ENCODE measurements at regions of chr15 and their contacts with region 1.

Region 1: DNA sequence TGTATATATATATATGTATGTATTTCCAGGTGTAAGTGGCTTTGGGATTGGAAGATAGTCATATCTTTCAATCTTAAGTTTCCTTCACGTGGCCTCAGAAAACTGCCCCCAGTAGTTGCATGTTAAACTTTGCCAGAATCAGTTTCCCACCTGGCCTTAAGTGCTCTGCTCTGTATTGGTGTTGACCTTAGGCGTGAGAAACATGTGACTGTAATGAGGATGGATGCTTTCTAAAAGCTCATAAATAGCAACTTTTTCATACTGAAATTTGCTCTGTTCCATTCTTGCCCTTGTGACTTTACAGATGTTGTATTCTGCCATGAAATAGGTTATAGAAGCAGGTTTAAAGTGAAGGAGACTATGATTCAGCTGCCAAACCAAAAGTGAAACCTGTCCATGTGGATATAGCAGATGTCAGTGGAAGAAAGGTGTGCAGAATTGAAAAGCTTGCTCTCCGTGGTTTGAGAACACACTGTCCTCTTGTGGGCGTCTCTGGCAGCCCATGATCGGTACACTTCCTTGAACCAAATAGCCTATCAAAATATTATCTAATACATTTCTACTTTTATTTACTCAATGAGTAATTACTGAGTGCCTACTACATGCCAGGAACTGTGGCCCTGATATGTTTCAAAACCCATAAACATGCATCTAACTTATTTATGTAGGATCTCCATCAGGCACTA is 15.8 kb downstream of the SCG5 start:
- DNase-seq: no peak
- ATAC-seq: no peak
- H3K4me3 ChIP-seq: no peak overlapping the region
- H3K27ac ChIP-seq: no peak overlapping the region
- H3K4me1 ChIP-seq: peaks cover 10% of the 10 kb centered on the region
- H3K27me3 ChIP-seq: no peaks in the 10 kb centered on the region
- CTCF ChIP-seq: no peak

Region 2: GRCh38 chr15:32844118-32844711 is 186.9 kb after region 1 on chr15:
- intact Hi-C with region 1: loop called in 1 of 2 experiments (anchors 10 kb)
- DNase-seq: no peak
- ATAC-seq: no peak
- H3K4me3 ChIP-seq: no peak overlapping the region
- H3K27ac ChIP-seq: no peak overlapping the region
- H3K4me1 ChIP-seq: no peaks in the 10 kb centered on the region
- H3K27me3 ChIP-seq: peaks cover 0 to 2% (median 0%) of the 10 kb centered on the region in 3 donors
- CTCF ChIP-seq: peak; percentile 46

Region 3: GRCh38 chr15:32952901-32953532 is 295.7 kb after region 1 on chr15:
- intact Hi-C with region 1: loop called in 1 of 2 experiments (anchors 5 kb)
- DNase-seq: peak in 1 of 2 donors; percentile 26
- ATAC-seq: no peak
- H3K4me3 ChIP-seq: no peak overlapping the region
- H3K27ac ChIP-seq: no peak overlapping the region
- H3K4me1 ChIP-seq: no peaks in the 10 kb centered on the region
- H3K27me3 ChIP-seq: no peaks in the 10 kb centered on the region
- CTCF ChIP-seq: no peak

Region 4: GRCh38 chr15:32994810-32995424 is 337.6 kb after region 1 on chr15:
- intact Hi-C with region 1: loop called (anchors 1 to 10 kb)
- DNase-seq: no peak
- ATAC-seq: no peak
- H3K4me3 ChIP-seq: no peak overlapping the region
- H3K27ac ChIP-seq: no peak overlapping the region
- H3K4me1 ChIP-seq: no peaks in the 10 kb centered on the region
- H3K27me3 ChIP-seq: no peaks in the 10 kb centered on the region
- CTCF ChIP-seq: peak; percentile 45

Region 5: DNA sequence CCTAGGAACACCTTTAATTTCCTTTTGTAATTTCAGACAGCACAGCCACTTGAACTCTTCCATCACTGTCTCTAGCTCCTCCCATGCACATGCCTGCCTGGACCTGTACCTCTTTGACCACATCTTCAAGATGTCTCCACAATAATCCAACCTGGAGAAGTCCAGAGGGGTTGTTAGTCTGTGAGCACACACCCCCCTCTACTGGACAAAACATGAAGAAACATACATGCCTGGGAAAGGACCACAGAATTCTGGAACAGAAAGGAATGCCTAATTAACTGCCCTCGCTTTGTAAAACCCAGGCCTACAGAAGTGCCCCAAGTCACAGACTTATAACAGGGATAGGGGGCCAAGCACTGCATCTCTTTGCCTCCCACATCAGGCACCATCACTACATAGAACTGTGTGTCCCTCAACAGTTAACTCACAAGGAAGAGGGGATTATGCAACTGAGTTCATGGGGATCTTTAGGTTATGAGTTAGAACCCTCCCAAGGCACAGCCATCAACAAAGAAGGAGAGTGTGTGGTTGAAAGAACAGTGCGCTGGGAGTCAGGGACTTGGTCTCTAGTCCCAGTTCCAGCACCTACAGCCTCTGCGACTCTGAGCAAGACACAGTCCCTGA is 475.5 kb after region 1 on chr15:
- intact Hi-C with region 1: loop called (anchors 10 kb)
- DNase-seq: no peak
- ATAC-seq: peak; percentile 62 to 78 (median 66)
- H3K4me3 ChIP-seq: no peak overlapping the region
- H3K27ac ChIP-seq: no peak overlapping the region
- H3K4me1 ChIP-seq: peaks cover 38% of the 10 kb centered on the region
- H3K27me3 ChIP-seq: no peaks in the 10 kb centered on the region
- CTCF ChIP-seq: peak; percentile 67

Measured in psoas muscle (tissue), 8 donors.